B cell (primary cell): ENCODE measurements at regions of chr12 and their contacts with region 1.

Region 1: DNA sequence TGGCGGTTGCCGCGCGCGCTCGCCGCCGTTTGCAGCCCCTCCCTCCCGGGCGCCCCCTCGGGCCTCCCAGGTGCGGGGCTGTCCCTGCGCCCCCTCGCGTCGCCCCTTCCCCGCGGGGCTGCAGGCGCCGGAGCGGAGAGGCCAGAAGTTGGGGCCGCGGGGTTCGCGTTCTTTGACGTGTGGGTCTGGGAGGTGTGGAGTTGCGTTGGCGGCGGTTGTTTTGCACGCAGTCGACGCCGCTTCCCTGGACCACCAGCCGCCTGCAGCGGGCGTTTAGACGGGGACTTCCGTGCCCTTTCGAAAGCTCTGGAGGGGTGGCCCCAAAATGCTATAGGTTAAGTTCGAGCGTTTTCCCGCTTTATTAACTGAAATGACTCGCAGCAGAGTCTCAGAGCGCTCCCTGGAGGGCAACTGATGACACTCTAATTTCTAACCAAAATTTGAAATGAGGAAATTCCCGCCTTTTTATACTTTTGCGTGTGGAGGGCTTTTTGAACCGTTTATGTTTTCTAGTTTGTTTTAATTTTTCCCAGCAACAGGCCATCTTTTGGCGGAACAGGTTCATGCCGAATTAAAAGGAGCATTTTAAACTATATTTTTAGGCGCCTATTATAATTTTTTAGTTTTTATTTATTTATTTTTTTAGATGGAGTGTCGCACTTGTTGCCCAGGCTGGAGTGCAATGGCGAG is 939 bp downstream of the TMPO start:
- DNase-seq: peak; percentile 93
- ATAC-seq: peak; percentile 54
- H3K4me3 ChIP-seq: peak overlapping the region; percentile 57 to 100 (median 91)
- H3K4me3 Mint-ChIP-seq: peak overlapping the region; percentile 99
- H3K27ac ChIP-seq: peak overlapping the region; percentile 64 to 78
- H3K27ac Mint-ChIP-seq: peak overlapping the region; percentile 99
- H3K4me1 ChIP-seq: peaks cover 39 to 53% of the 10 kb centered on the region in 2 donors
- H3K4me1 Mint-ChIP-seq: peaks cover 50% of the 10 kb centered on the region
- H3K27me3 ChIP-seq: no peaks in the 10 kb centered on the region
- H3K27me3 Mint-ChIP-seq: no peaks in the 10 kb centered on the region
- CTCF ChIP-seq: peak; percentile 80

Region 2: DNA sequence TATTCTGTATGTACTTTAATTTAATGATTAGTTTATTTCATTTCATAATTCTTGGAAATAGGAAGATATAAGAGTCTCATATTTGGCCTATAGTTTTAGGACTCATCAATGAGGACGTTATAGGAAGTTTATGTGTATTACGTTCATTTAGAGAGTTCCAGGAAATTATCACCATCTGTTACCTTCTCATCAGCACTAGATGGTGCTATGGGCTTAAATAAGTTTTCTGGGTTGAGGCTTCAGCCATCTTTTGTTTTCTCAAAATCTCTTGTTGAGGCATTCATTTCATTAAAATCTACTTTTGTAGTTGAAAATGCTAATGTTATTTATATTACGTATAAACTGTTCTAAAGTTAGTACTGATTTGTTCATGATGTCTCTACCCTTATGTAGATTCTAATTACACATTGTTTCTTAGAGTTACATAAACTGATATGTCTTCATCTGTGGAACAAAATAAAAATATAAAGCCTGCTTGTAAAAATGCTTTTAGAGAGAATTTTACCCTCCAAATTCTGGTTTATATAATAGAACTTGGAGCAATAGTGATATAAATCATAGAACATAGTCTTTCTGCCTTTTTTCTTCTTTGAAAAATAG is 1937.7 kb before region 1 on chr12:
- CTCF ChIA-PET with region 1: no interaction called
- POLR2A ChIA-PET with region 1: no interaction called
- intact Hi-C with region 1: loop called (anchors 10 kb)
- DNase-seq: peak; percentile 69
- ATAC-seq: peak; percentile 60
- H3K4me3 ChIP-seq: no peak overlapping the region
- H3K4me3 Mint-ChIP-seq: no peak overlapping the region
- H3K27ac ChIP-seq: no peak overlapping the region
- H3K27ac Mint-ChIP-seq: no peak overlapping the region
- H3K4me1 ChIP-seq: no peaks in the 10 kb centered on the region
- H3K4me1 Mint-ChIP-seq: peaks cover 2% of the 10 kb centered on the region
- H3K27me3 ChIP-seq: no peaks in the 10 kb centered on the region
- H3K27me3 Mint-ChIP-seq: no peaks in the 10 kb centered on the region
- CTCF ChIP-seq: peak; percentile 81

Region 3: DNA sequence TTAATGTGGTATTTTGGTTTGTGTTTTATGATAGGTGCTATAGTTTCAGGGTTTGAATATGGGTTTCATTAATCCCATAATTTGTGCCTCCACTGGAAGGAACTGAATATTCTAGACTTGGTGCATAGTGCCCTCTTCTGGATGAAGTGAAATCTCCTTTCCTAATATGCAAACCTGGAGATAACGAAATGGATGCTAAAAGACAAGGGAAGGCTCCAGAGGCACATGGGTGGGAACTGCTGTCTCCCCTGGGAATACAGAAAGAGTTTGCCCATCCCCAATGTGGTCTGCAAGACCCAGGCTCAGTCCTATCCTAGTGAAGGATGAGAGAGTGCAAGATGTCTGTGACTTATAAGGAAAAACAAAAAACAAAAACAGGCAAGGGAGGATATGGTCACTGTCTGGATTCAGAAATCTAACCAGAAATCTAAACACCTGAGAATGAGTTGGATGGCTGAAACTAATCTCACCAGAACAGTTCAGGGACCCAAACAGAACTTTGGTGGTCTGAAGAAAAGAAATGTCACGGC is 143.2 kb before region 1 on chr12:
- CTCF ChIA-PET with region 1: no interaction called
- POLR2A ChIA-PET with region 1: no interaction called
- intact Hi-C with region 1: no loop called
- DNase-seq: peak; percentile 6
- ATAC-seq: no peak
- H3K4me3 ChIP-seq: no peak overlapping the region
- H3K4me3 Mint-ChIP-seq: no peak overlapping the region
- H3K27ac ChIP-seq: no peak overlapping the region
- H3K27ac Mint-ChIP-seq: no peak overlapping the region
- H3K4me1 ChIP-seq: no peaks in the 10 kb centered on the region
- H3K4me1 Mint-ChIP-seq: no peaks in the 10 kb centered on the region
- H3K27me3 ChIP-seq: peaks cover 0 to 7% (median 3%) of the 10 kb centered on the region in 4 experiments
- H3K27me3 Mint-ChIP-seq: peaks cover 60% of the 10 kb centered on the region
- CTCF ChIP-seq: no peak

Region 4: GRCh38 chr12:98490501-98491453 is 25.6 kb before region 1 on chr12:
- CTCF ChIA-PET with region 1: interaction called, 195 read pairs
- POLR2A ChIA-PET with region 1: interaction called, 14 read pairs
- intact Hi-C with region 1: loop called (anchors 1 kb)
- DNase-seq: peak; percentile 88
- ATAC-seq: peak; percentile 95
- H3K4me3 ChIP-seq: peak overlapping the region in 1 of 5 experiments; percentile 26
- H3K4me3 Mint-ChIP-seq: peak overlapping the region; percentile 32
- H3K27ac ChIP-seq: peak overlapping the region; percentile 0 to 14
- H3K27ac Mint-ChIP-seq: peak overlapping the region; percentile 92
- H3K4me1 ChIP-seq: peaks cover 6% of the 10 kb centered on the region in 2 donors
- H3K4me1 Mint-ChIP-seq: peaks cover 5% of the 10 kb centered on the region
- H3K27me3 ChIP-seq: no peaks in the 10 kb centered on the region
- H3K27me3 Mint-ChIP-seq: no peaks in the 10 kb centered on the region
- CTCF ChIP-seq: peak; percentile 84

Region 5: DNA sequence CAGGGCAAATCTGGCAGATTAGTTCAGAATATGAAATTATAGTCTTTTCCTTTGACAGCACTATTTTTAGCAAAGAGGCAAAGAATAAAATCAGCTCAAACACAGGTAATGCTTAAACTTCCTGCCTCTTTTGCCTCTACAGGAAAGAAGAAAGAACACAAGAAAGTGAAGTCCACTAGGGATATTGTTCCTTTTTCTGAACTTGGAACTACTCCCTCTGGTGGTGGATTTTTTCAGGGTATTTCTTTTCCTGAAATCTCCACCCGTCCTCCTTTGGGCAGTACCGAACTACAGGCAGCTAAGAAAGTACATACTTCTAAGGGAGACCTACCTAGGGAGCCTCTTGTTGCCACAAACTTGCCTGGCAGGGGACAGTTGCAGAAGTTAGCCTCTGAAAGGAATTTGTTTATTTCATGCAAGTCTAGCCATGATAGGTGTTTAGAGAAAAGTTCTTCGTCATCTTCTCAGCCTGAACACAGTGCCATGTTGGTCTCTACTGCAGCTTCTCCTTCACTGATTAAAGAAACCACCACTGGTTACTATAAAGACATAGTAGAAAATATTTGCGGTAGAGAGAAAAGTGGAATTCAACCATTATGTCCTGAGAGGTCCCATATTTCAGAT is 16.5 kb after region 1 on chr12:
- CTCF ChIA-PET with region 1: interaction called, 14 read pairs
- POLR2A ChIA-PET with region 1: interaction called, 7 read pairs
- intact Hi-C with region 1: loop called (anchors 2 kb)
- DNase-seq: peak; percentile 67
- ATAC-seq: peak; percentile 31
- H3K4me3 ChIP-seq: no peak overlapping the region
- H3K4me3 Mint-ChIP-seq: no peak overlapping the region
- H3K27ac ChIP-seq: no peak overlapping the region
- H3K27ac Mint-ChIP-seq: peak overlapping the region; percentile 46
- H3K4me1 ChIP-seq: no peaks in the 10 kb centered on the region
- H3K4me1 Mint-ChIP-seq: peaks cover 2% of the 10 kb centered on the region
- H3K27me3 ChIP-seq: no peaks in the 10 kb centered on the region
- H3K27me3 Mint-ChIP-seq: no peaks in the 10 kb centered on the region
- CTCF ChIP-seq: peak; percentile 82

Region 6: GRCh38 chr12:98644711-98645402 is 128.5 kb after region 1 on chr12 and contains the starts of genes APAF1 and IKBIP:
- CTCF ChIA-PET with region 1: no interaction called
- POLR2A ChIA-PET with region 1: interaction called, 9 read pairs
- intact Hi-C with region 1: loop called (anchors 1 kb)
- DNase-seq: peak; percentile 98
- ATAC-seq: peak; percentile 88
- H3K4me3 ChIP-seq: peak within 1 kb of the TSS; percentile 84 to 99 (median 92)
- H3K4me3 Mint-ChIP-seq: peak within 1 kb of the TSS; percentile 96
- H3K27ac ChIP-seq: peak within 1 kb of the TSS; percentile 77 to 84
- H3K27ac Mint-ChIP-seq: peak within 1 kb of the TSS; percentile 98
- H3K4me1 ChIP-seq: peaks cover 13 to 14% of the 10 kb centered on the region in 2 donors
- H3K4me1 Mint-ChIP-seq: peaks cover 23% of the 10 kb centered on the region
- H3K27me3 ChIP-seq: no peaks in the 10 kb centered on the region
- H3K27me3 Mint-ChIP-seq: no peaks in the 10 kb centered on the region
- CTCF ChIP-seq: peak; percentile 1
- total RNA-seq, gene APAF1: 36.9 and 37.8 TPM in 2 replicates
- total RNA-seq, gene IKBIP: 12.0 TPM in 2 replicates